ENCODE measurements at regions of chr4 and their contacts with region 1.

Region 1: GRCh38 chr4:15805583-15806517 is 27.7 kb downstream of the CD38 start:
- DNase-seq: no peak
- H3K4me3 Mint-ChIP-seq: no peak overlapping the region
- H3K27ac Mint-ChIP-seq: peak overlapping the region; percentile 1
- H3K4me1 Mint-ChIP-seq: peaks cover 66% of the 10 kb centered on the region
- H3K27me3 Mint-ChIP-seq: no peaks in the 10 kb centered on the region

Region 2: DNA sequence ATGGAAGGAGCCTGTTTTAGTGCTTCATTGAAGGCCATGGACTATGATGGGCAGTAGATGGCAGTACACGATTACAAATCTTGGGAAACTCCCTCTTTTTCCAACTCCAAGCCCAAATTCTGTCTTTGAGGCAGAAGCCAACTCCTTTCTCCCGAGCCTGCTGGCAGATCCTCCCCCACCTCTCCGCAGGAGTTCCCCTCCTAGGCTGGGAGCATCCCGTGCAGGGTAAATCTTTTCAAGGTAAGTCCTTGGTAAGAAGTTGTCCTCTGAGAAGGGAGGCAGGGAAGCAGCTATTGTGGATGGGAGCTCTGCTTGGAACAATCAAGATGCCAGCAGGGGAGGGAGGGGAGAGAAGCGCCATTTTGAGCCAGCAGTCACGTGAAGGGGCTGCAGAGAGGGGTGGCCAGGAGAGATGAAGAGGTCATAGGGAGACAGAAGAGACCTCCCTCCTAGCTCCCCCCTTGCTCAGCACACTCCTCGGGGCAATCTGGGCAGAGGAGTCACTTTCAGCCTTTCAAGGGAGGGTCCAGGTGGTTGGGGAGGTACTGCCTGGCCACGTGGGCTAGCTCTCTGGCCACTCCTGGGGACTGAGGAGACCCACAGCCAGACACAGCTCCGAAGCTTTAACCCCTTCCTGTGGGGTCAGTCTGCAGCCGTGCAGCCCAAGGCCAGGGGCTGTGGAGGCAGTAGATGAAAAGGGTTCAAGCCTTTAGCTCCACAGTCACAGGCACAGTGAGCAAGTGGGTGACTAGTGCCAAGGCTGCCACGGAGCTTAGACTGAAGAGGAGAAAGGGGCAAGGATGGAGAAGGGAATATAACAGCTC is 326.5 kb before region 1 on chr4:
- intact Hi-C with region 1: loop called (anchors 5 kb)
- DNase-seq: no peak
- H3K4me3 Mint-ChIP-seq: no peak overlapping the region
- H3K27ac Mint-ChIP-seq: no peak overlapping the region
- H3K4me1 Mint-ChIP-seq: no peaks in the 10 kb centered on the region
- H3K27me3 Mint-ChIP-seq: no peaks in the 10 kb centered on the region

Region 3: DNA sequence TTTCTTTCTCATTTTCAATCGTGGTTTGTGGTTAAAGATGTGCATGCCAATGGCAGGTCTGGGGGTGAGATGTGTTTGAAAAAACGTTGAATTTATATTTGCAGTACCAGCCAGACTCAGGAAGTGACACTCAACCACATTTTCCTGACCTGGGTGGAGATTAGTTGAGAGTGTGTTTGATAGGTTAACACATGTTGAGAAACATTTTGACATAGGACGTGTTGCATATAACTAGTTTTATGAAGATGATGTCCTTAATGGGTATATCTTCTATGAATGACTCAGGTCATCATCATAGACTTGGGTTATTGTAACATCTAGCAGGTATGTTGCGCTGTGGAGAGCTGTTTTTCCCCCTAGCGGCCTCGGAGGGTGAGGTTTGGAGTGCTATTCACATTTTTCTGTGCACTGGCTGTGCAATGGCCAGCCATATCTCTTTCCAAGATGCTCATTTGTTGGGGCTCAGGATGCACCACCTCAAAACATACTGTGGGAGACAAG is 49.4 kb before region 1 on chr4:
- intact Hi-C with region 1: no loop called
- DNase-seq: peak; percentile 76
- H3K4me3 Mint-ChIP-seq: peak overlapping the region; percentile 80
- H3K27ac Mint-ChIP-seq: peak overlapping the region; percentile 96
- H3K4me1 Mint-ChIP-seq: peaks cover 54% of the 10 kb centered on the region
- H3K27me3 Mint-ChIP-seq: no peaks in the 10 kb centered on the region

Region 4: DNA sequence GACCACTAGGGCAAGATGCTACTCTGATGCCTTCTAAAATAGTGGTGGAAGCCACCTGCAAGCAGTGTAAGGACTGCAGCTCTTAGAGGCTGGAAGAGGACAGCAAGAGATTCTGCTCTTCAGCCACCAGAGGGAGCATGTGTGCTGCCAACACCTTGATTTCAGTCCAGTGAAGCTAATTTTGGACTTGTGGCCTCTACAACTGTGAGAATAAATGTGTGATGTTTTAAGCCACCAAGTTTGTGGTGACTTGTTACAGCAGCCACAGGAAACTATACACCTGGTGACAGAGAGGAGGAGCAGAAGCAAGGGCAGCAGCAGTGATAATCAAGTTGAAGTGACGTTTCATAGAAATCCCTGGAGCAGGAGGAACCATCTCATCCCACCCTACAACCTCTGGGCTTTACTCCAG is 76.8 kb after region 1 on chr4:
- intact Hi-C with region 1: loop called (anchors 5 kb)
- DNase-seq: peak; percentile 30
- H3K4me3 Mint-ChIP-seq: no peak overlapping the region
- H3K27ac Mint-ChIP-seq: no peak overlapping the region
- H3K4me1 Mint-ChIP-seq: peaks cover 1% of the 10 kb centered on the region
- H3K27me3 Mint-ChIP-seq: peaks cover 26% of the 10 kb centered on the region

Region 5: GRCh38 chr4:15956179-15956850 is 150.5 kb after region 1 on chr4:
- intact Hi-C with region 1: loop called (anchors 1 kb)
- DNase-seq: peak; percentile 68
- H3K4me3 Mint-ChIP-seq: no peak overlapping the region
- H3K27ac Mint-ChIP-seq: no peak overlapping the region
- H3K4me1 Mint-ChIP-seq: peaks cover 6% of the 10 kb centered on the region
- H3K27me3 Mint-ChIP-seq: peaks cover 14% of the 10 kb centered on the region

Region 6: DNA sequence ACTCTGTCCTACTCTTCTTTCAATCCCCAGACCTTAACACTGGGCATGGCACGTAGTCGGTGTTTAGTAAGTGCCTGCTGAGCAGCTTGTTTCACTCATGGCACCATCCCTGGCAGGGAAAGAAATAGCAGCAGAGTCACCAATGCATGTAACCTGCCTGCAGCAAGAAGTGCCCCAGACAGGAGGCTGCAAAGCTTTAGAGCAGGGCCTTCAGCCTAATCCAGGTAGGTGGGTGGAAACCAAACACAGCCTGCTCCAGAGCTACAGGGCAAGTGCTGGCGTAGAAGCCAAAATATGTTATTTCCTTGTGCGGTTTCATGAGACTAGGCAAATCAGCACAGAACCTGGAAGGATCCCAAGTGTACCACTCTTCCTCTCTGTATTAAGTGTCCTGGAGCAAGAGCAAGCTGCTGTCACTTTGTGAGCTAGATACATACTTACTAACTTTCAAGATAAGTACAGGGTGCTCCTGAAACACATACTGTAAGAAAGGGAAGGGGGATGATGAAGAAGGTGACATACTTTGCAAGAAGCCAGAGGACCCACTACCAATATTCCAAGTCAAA is 272.4 kb after region 1 on chr4:
- intact Hi-C with region 1: no loop called
- DNase-seq: no peak
- H3K4me3 Mint-ChIP-seq: no peak overlapping the region
- H3K27ac Mint-ChIP-seq: no peak overlapping the region
- H3K4me1 Mint-ChIP-seq: peaks cover 13% of the 10 kb centered on the region
- H3K27me3 Mint-ChIP-seq: peaks cover 59% of the 10 kb centered on the region

Measured in activated T-helper 2 cell treated with anti-CD3 and anti-CD28 coated beads, Interferon-gamma antibody, Interleukin-2, Interleukin-4, amounts not matched to agents 10 μg/mL and 5 μg/mL and 100 μg/mL, durations not matched to agents 14 hours and 24 hours and 36 hours (primary cell).